ENCODE measurements at regions of chr4 and their contacts with region 1.

Region 1: DNA sequence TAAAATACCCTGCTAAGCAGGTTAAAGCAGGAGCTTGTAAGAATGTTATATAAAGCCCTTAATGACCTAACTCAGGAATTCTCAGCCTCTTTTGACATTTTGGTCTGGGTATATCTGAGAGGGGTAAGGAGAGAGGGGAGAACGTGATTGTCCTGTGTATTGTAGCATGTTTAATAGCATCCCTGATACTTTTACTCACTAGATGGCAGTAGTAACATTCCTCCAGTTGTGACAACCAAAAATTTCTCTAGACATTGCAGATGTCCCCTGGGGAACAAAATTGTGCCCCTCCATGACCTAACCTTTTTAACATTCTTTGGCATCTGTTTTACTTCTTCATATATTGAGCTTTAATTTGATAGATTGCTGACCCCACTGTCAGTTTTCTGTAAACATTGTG is 17.9 kb downstream of the SMARCA5 start:
- DNase-seq: peak; percentile 59
- H3K4me3 ChIP-seq: peak overlapping the region in 1 of 3 experiments; percentile 44
- H3K27ac ChIP-seq: peak overlapping the region; percentile 57
- H3K4me1 ChIP-seq: peaks cover 18% of the 10 kb centered on the region
- H3K27me3 ChIP-seq: no peaks in the 10 kb centered on the region
- CTCF ChIP-seq: peak; percentile 42 to 43
- POLR2A ChIP-seq: no peak

Region 2: DNA sequence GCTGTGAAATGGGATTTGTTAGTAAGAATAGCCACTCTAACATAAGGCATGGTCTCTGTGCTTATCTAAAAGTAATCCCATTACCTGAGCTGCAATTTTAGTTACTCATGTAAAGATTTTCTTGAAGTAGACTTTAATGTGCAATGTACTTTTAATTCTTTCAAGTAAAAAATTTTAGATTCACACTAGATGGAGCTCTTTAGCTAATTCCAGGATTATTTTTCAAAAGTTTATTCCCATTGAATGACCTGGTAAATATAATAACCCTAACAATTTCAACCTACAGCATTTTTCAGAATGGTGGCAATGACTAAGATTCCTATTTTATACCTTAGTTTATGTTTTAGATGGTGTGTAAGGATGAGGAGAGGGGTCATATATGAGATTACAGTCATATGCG is 328.6 kb before region 1 on chr4:
- CTCF ChIA-PET with region 1: interaction called, 3 read pairs
- POLR2A ChIA-PET with region 1: no interaction called
- dilution Hi-C with region 1: no loop called
- intact Hi-C with region 1: loop called (anchors 5 kb)
- DNase-seq: peak; percentile 46
- H3K4me3 ChIP-seq: no peak overlapping the region
- H3K27ac ChIP-seq: no peak overlapping the region
- H3K4me1 ChIP-seq: no peaks in the 10 kb centered on the region
- H3K27me3 ChIP-seq: no peaks in the 10 kb centered on the region
- CTCF ChIP-seq: no peak
- POLR2A ChIP-seq: no peak

Region 3: GRCh38 chr4:143549928-143550327 is 18.5 kb after region 1 on chr4:
- CTCF ChIA-PET with region 1: interaction called, 7 read pairs
- POLR2A ChIA-PET with region 1: interaction called, 3 read pairs
- dilution Hi-C with region 1: no loop called
- intact Hi-C with region 1: loop called (anchors 2 kb)
- DNase-seq: no peak
- H3K4me3 ChIP-seq: no peak overlapping the region
- H3K27ac ChIP-seq: no peak overlapping the region
- H3K4me1 ChIP-seq: no peaks in the 10 kb centered on the region
- H3K27me3 ChIP-seq: no peaks in the 10 kb centered on the region
- CTCF ChIP-seq: no peak
- POLR2A ChIP-seq: no peak

Region 4: DNA sequence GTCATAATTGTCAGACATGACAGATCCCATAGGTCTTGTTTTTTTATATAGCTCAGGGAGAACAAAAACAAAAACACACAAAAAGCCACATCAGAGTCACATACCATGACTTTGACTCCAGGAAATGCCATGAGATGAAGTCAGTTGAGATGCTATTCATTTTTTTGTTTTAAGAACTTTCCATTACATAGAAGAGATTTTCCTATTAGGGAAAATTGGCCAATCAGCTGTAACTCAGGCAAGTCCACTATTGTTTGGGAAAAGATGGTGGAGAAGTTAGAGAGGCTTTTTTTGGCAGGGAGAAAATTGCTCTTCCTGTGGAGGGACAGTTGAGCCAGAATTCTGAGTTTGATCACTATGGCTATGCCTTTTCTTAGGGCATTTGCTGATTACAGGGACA is 54.7 kb after region 1 on chr4:
- CTCF ChIA-PET with region 1: interaction called, 8 read pairs
- POLR2A ChIA-PET with region 1: no interaction called
- dilution Hi-C with region 1: no loop called
- intact Hi-C with region 1: loop called (anchors 1 kb)
- DNase-seq: peak; percentile 86
- H3K4me3 ChIP-seq: no peak overlapping the region
- H3K27ac ChIP-seq: peak overlapping the region; percentile 97
- H3K4me1 ChIP-seq: peaks cover 18% of the 10 kb centered on the region
- H3K27me3 ChIP-seq: no peaks in the 10 kb centered on the region
- CTCF ChIP-seq: no peak
- POLR2A ChIP-seq: no peak

Region 5: GRCh38 chr4:143986180-143986579 is 454.8 kb after region 1 on chr4:
- CTCF ChIA-PET with region 1: interaction called, 26 read pairs
- POLR2A ChIA-PET with region 1: no interaction called
- dilution Hi-C with region 1: no loop called
- intact Hi-C with region 1: no loop called
- DNase-seq: no peak
- H3K4me3 ChIP-seq: no peak overlapping the region
- H3K27ac ChIP-seq: no peak overlapping the region
- H3K4me1 ChIP-seq: no peaks in the 10 kb centered on the region
- H3K27me3 ChIP-seq: no peaks in the 10 kb centered on the region
- CTCF ChIP-seq: no peak
- POLR2A ChIP-seq: no peak

Measured in endothelial cell of umbilical vein (primary cell).